ENCODE measurements at regions of chr11 and their contacts with region 1.

Region 1: GRCh38 chr11:108568195-108568858 is 25.2 kb downstream of the EXPH5 start:
- DNase-seq: no peak
- ATAC-seq: no peak
- H3K4me3 ChIP-seq: no peak overlapping the region
- H3K27ac ChIP-seq: no peak overlapping the region
- H3K4me1 ChIP-seq: no peaks in the 10 kb centered on the region
- H3K27me3 ChIP-seq: no peaks in the 10 kb centered on the region
- CTCF ChIP-seq: no peak

Region 2: GRCh38 chr11:108037636-108038035 is 530.7 kb before region 1 on chr11:
- CTCF ChIA-PET with region 1: no interaction called
- POLR2A ChIA-PET with region 1: no interaction called
- in situ Hi-C with region 1: no loop called
- intact Hi-C with region 1: no loop called
- DNase-seq: no peak
- ATAC-seq: no peak
- H3K4me3 ChIP-seq: no peak overlapping the region
- H3K27ac ChIP-seq: no peak overlapping the region
- H3K4me1 ChIP-seq: no peaks in the 10 kb centered on the region
- H3K27me3 ChIP-seq: no peaks in the 10 kb centered on the region
- CTCF ChIP-seq: no peak

Region 3: DNA sequence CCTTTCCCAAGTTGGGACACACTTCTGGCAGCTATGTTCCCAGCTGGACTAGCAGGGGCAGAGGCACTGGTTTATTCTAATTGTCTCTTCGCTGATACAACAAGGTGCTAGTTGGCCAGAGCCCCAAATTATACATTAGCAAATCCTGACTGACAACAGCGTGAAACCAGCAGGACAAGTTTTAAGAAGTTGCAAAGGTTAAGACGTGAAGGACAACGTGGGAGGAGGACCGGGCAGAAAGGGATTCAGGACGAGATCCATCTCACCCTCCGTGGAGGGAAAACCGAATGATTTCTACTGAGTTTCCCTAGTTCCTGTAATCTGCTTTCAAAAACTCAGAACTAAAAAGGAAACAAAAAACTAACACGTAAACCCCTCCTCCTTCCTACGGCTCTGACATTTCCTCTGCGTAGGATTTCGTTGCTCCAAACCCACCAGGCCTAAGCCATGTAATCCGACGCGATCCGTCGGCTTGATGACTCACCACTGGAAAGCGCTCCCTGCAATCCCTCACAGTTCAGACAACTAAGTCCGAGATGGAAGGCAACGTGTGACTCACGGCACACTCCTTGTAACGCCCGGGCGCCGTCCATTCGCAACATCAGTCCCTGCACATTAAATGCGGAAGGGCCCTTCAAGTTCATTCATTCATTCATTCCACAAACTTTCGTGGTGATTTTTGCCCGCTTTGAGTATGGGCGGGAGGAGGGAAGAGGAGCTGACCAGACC is 70.8 kb before region 1 on chr11:
- CTCF ChIA-PET with region 1: no interaction called
- POLR2A ChIA-PET with region 1: no interaction called
- in situ Hi-C with region 1: no loop called
- intact Hi-C with region 1: no loop called
- DNase-seq: peak; percentile 86
- ATAC-seq: peak; percentile 94
- H3K4me3 ChIP-seq: peak overlapping the region; percentile 69 to 78
- H3K27ac ChIP-seq: peak overlapping the region; percentile 90
- H3K4me1 ChIP-seq: peaks cover 10% of the 10 kb centered on the region
- H3K27me3 ChIP-seq: no peaks in the 10 kb centered on the region
- CTCF ChIP-seq: no peak

Region 4: DNA sequence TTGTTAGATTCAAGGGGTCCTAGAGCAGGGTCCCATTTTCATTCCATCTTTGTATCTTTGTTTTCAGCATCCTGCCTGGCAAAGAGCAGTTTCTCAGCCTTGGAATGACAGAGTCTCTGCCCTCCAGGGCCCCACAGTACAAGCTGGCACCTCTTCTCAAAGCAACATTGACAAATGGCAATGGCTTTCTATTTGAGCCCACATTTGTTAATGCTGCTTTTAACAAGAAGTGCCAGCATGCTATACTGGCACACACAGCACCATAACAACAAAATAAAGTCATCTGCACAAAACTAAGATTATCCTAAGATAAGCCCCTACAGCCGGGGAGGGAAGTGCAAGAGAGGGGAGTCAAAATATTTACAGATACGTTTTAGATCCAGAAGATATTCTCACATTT is 543.9 kb after region 1 on chr11:
- CTCF ChIA-PET with region 1: no interaction called
- POLR2A ChIA-PET with region 1: interaction called, 12 read pairs
- in situ Hi-C with region 1: no loop called
- intact Hi-C with region 1: no loop called
- DNase-seq: no peak
- ATAC-seq: no peak
- H3K4me3 ChIP-seq: no peak overlapping the region
- H3K27ac ChIP-seq: no peak overlapping the region
- H3K4me1 ChIP-seq: no peaks in the 10 kb centered on the region
- H3K27me3 ChIP-seq: no peaks in the 10 kb centered on the region
- CTCF ChIP-seq: no peak